ENCODE measurements at regions of chr19 and their contacts with region 1.

Region 1: GRCh38 chr19:56393119-56394012 is at the start of gene ZNF582:
- DNase-seq: peak; percentile 91
- H3K4me3 ChIP-seq: peak within 1 kb of the TSS; percentile 86
- H3K27ac ChIP-seq: peak within 1 kb of the TSS; percentile 78
- H3K27me3 ChIP-seq: no peaks in the 10 kb centered on the region
- CTCF ChIP-seq: peak; percentile 84
- polyA plus RNA-seq, gene ZNF582: 3.1 and 3.9 TPM in 2 replicates

Region 2: GRCh38 chr19:56377104-56377924 is 16.1 kb before region 1 on chr19:
- CTCF ChIA-PET with region 1: interaction called, 18 read pairs
- POLR2A ChIA-PET with region 1: no interaction called
- DNase-seq: no peak
- H3K4me3 ChIP-seq: no peak overlapping the region
- H3K27ac ChIP-seq: no peak overlapping the region
- H3K27me3 ChIP-seq: no peaks in the 10 kb centered on the region
- CTCF ChIP-seq: no peak

Region 3: DNA sequence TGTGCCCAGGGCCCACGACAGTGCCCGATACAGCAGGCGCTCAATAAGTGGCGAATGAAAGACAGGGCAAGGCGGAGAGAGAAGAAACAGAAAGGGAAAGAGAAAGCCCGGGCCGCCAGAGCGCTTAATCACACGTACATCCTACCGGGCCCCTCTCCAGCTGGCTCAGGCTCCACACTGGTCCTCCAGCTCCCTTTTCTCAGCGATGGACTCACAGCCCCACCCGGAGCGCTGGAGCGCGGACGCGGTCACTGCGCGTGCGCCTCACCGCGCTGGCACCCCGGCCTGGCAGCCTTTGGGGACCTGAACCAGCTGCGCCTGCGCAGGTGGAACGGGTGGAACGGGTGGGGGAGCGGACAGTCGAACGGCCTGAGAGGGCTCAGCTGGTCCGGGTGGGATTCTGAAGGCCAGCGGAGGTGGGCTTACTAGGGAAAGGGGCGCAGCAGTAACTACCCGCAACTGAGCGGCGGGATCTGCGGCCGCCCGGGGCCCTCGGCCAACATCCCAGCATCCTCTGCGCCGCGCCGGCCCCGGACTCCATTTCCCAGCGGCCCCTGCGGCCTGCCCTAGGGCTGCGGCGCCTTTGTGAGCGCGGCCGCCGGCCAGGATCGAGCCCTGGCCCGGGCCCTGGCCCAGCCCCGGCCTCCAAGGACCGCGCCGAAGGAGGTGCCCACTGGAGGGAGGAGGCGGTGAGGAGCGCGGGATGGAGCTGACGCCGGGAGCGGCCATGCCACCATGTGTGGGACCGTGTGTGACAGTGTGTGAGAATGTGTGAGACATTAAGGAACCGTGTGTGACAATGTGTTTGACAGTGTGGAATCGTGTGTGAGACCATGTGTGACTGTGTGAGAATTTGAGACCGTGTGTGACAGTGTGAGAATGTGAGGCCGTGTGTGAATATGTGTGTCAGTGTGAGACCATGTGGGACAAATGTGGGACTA is 10.7 kb after region 1 on chr19 and contains the start of gene ZNF583:
- CTCF ChIA-PET with region 1: interaction called, 19 read pairs
- POLR2A ChIA-PET with region 1: interaction called, 5 read pairs
- DNase-seq: peak; percentile 93
- H3K4me3 ChIP-seq: peak within 1 kb of the TSS; percentile 96
- H3K27ac ChIP-seq: peak within 1 kb of the TSS; percentile 91
- H3K27me3 ChIP-seq: no peaks in the 10 kb centered on the region
- CTCF ChIP-seq: no peak
- polyA plus RNA-seq, gene ZNF583: 4.5 and 6.2 TPM in 2 replicates

Region 4: GRCh38 chr19:56423276-56423984 is 30.1 kb after region 1 on chr19:
- CTCF ChIA-PET with region 1: no interaction called
- POLR2A ChIA-PET with region 1: no interaction called
- DNase-seq: no peak
- H3K4me3 ChIP-seq: no peak overlapping the region
- H3K27ac ChIP-seq: no peak overlapping the region
- H3K27me3 ChIP-seq: no peaks in the 10 kb centered on the region
- CTCF ChIP-seq: no peak

Region 5: GRCh38 chr19:56933014-56933705 is 539.8 kb after region 1 on chr19:
- CTCF ChIA-PET with region 1: no interaction called
- POLR2A ChIA-PET with region 1: no interaction called
- DNase-seq: no peak
- H3K4me3 ChIP-seq: no peak overlapping the region
- H3K27ac ChIP-seq: no peak overlapping the region
- H3K27me3 ChIP-seq: no peaks in the 10 kb centered on the region
- CTCF ChIP-seq: no peak

Measured in AG04450 (cell line).